Activated T-helper 1 cell treated with anti-CD3 and anti-CD28 coated beads, Interleukin-12 subunit alpha, Interleukin-12 subunit beta, Interleukin-2, Interleukin-4 antibody, amounts not matched to agents 30 ng/mL and 10 ng/mL and 1 ng/mL, durations not matched to agents 14 hours and 24 hours and 36 hours (primary cell): ENCODE measurements at regions of chr1 and their contacts with region 1.

Region 1: DNA sequence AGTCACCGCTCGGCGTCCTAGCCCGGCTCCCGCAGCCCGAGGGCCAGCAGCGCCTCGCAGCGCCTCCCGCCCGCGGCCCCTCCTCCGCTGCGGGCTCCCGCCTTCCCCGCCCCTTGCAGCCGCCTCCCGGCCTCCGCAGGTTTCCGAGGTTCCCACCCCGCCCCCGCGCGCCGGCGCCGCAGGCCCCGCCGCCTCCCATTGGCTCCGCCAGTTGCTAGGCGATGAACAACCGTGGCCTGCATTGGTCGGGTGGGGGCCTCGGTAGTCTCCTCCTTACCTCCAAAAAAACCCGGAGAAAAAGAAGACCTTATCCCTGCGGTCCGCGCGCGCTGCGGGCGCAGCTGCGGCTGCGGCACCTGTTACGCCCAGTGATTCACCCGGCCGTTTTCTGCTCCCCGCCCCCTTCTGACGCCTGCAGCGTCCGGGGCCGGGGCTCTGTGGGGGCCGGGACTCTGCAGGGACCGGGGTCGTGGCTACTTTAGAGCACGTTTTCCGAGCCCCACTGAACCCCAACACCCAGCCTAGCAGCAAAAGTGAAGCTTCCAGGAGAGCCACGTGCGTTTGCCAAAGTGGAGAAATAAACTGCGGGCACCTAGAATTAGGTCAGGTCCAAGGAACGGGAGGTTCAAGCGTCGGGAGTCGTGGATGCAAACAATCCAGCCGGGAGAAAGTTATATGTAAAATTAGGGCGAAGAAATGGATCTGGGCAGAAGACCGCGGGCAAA is at the start of gene SSX2IP:
- DNase-seq: peak; percentile 98
- H3K4me3 Mint-ChIP-seq: peak within 1 kb of the TSS; percentile 94
- H3K27ac Mint-ChIP-seq: peak within 1 kb of the TSS; percentile 95
- H3K4me1 Mint-ChIP-seq: peaks cover 59% of the 10 kb centered on the region
- H3K27me3 Mint-ChIP-seq: no peaks in the 10 kb centered on the region
- total RNA-seq, gene SSX2IP: 11.1 and 15.0 TPM in 2 replicates

Region 2: GRCh38 chr1:84077476-84078107 is 613.0 kb before region 1 on chr1:
- intact Hi-C with region 1: loop called (anchors 5 kb)
- DNase-seq: peak; percentile 63
- H3K4me3 Mint-ChIP-seq: peak overlapping the region; percentile 87
- H3K27ac Mint-ChIP-seq: peak overlapping the region; percentile 71
- H3K4me1 Mint-ChIP-seq: peaks cover 17% of the 10 kb centered on the region
- H3K27me3 Mint-ChIP-seq: peaks cover 23% of the 10 kb centered on the region

Region 3: DNA sequence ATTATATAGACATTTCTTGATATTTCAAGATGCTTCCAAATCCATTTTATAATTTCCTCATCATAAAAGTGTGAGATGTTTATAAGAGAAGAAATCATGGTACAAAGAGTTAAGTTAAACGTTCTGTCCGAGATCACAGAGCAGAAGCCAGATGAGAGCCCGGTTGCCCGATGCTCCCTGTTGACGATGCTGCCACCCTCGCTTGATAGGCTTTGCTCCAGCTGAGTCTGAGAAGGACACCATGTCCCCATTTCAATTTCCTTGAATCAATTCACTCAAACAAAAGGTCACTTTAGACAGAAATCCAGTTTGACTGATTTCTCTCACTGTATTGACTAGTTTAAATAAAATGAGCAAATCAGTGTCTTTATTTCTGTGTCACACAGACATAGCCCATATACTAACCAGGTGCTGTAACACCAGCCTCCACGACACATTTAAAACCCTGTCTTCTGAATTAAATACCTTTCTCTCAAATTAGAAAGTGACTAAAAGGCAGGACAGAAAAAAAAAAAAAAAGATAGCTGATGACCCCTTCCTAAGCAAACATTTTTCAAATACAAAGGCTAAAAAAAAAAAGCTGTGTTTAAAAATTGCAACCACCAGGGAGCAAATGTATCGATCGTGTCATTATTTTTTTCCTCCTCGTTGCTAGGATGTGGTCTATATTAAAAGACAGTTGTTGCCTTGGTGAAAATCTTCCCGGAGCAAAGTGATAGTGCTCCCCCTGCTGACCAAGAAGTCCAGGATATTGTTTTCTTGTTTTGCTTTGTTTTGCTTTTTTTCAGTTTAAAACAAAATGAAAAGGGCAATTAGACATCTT is 257.1 kb before region 1 on chr1:
- intact Hi-C with region 1: loop called (anchors 2 kb)
- DNase-seq: peak; percentile 54
- H3K4me3 Mint-ChIP-seq: peak overlapping the region; percentile 41
- H3K27ac Mint-ChIP-seq: peak overlapping the region; percentile 9
- H3K4me1 Mint-ChIP-seq: peaks cover 11% of the 10 kb centered on the region
- H3K27me3 Mint-ChIP-seq: no peaks in the 10 kb centered on the region

Region 4: GRCh38 chr1:84478876-84479868 is 211.4 kb before region 1 on chr1 and contains the start of gene RPF1:
- intact Hi-C with region 1: loop called (anchors 1 kb)
- DNase-seq: peak; percentile 70
- H3K4me3 Mint-ChIP-seq: peak within 1 kb of the TSS; percentile 98
- H3K27ac Mint-ChIP-seq: peak within 1 kb of the TSS; percentile 97
- H3K4me1 Mint-ChIP-seq: peaks cover 34% of the 10 kb centered on the region
- H3K27me3 Mint-ChIP-seq: peaks cover 28% of the 10 kb centered on the region
- total RNA-seq, gene RPF1: 65.2 and 65.5 TPM in 2 replicates

Region 5: DNA sequence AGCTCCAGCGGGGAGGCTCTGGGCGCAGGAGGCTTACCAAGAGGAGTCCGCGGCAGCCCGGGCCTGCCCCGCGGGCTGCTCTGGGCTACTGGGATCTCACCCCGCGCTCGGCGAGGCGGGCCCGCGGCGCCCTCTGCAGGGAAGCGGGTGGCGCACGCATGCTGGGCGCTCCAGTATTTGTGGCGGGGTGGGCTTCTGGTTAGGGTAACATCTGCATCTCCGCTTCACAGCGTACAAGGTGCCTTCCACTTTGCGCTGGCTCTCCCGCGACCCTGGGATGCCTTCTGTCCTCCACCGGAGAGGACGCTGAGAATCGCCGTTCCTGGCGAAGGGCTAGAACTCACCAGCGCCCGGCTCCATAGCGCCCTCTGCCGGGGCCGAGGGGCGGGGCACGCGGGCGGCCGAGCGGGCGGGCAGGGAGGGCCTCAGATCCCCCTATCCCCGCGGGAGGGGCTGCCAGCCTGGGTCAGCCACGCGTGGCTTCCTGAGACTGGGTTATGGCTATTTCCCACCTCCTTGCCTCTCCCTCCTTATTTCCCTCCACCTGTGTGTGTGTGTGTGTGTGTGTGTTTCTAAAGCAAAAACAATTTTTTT is 69.7 kb before region 1 on chr1:
- intact Hi-C with region 1: loop called (anchors 1 kb)
- DNase-seq: peak; percentile 79
- H3K4me3 Mint-ChIP-seq: peak overlapping the region; percentile 88
- H3K27ac Mint-ChIP-seq: peak overlapping the region; percentile 80
- H3K4me1 Mint-ChIP-seq: peaks cover 23% of the 10 kb centered on the region
- H3K27me3 Mint-ChIP-seq: no peaks in the 10 kb centered on the region

Region 6: DNA sequence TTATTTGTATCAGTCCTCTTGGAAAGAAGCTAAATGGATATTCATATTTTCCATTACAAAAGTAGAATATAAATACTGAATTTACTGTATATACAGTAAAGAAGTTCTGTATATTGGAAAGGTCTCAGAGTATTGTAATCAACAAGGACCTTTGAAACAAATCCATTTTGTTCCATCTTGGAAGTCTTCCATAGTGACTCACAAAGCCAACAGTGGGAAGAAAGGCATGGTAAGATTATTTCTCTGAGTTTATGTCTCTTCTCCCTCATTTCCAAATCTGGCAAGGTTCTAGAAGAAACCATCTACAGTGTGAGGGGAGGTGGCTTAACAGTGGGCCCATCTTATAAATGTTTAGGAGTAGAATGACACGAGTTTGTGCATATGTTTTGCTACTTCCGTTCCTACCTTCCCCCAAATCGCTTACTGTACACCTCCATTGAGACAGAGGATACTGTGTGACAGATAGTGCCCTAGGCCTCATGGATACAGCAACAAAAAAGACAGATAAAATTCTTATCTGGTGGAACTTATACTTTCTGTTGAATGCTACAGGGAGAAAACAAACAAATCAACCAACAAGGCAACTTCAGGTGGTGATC is 21.8 kb after region 1 on chr1:
- intact Hi-C with region 1: no loop called
- DNase-seq: no peak
- H3K4me3 Mint-ChIP-seq: no peak overlapping the region
- H3K27ac Mint-ChIP-seq: no peak overlapping the region
- H3K4me1 Mint-ChIP-seq: no peaks in the 10 kb centered on the region
- H3K27me3 Mint-ChIP-seq: peaks cover 12% of the 10 kb centered on the region

Region 7: GRCh38 chr1:84862810-84863251 is 172.3 kb after region 1 on chr1:
- intact Hi-C with region 1: loop called (anchors 5 kb)
- DNase-seq: peak; percentile 66
- H3K4me3 Mint-ChIP-seq: peak overlapping the region; percentile 77
- H3K27ac Mint-ChIP-seq: peak overlapping the region; percentile 82
- H3K4me1 Mint-ChIP-seq: peaks cover 53% of the 10 kb centered on the region
- H3K27me3 Mint-ChIP-seq: peaks cover 1% of the 10 kb centered on the region

Region 8: DNA sequence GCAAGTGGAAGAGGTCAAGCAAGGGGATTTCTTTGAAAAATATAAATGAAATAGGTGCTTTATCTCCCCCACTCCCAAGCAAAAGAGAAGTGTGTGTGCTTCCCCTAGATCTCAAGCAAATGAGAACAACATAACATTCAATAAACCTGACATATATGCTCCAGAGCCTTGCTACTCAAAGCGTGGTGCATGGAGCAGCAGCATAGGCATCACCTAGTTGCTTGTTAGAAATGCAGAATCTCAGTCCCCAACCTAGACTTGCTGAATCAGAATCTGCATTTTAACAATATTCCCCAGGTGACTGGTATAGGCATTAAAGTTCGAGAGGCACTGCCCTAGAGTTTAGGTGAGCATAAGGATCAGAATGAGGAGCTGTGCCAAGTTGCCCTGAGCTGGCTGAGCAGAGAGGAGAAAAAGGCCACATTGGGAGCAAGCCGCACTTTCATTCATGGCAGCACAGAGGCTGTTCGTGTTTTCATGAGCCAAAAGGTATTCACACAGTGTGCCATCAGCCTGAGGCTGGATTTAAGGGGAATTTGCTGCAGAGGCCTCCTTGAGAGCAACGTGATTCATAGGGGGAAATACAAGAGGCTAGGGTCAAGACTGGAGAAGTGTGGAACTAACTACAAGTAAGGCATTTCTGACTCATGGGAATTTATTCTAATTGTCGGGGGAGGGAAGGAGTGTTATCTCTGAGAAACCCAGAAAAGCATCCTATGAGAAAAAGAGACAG is 216.7 kb after region 1 on chr1:
- intact Hi-C with region 1: no loop called
- DNase-seq: no peak
- H3K4me3 Mint-ChIP-seq: no peak overlapping the region
- H3K27ac Mint-ChIP-seq: no peak overlapping the region
- H3K4me1 Mint-ChIP-seq: no peaks in the 10 kb centered on the region
- H3K27me3 Mint-ChIP-seq: peaks cover 22% of the 10 kb centered on the region

Region 9: DNA sequence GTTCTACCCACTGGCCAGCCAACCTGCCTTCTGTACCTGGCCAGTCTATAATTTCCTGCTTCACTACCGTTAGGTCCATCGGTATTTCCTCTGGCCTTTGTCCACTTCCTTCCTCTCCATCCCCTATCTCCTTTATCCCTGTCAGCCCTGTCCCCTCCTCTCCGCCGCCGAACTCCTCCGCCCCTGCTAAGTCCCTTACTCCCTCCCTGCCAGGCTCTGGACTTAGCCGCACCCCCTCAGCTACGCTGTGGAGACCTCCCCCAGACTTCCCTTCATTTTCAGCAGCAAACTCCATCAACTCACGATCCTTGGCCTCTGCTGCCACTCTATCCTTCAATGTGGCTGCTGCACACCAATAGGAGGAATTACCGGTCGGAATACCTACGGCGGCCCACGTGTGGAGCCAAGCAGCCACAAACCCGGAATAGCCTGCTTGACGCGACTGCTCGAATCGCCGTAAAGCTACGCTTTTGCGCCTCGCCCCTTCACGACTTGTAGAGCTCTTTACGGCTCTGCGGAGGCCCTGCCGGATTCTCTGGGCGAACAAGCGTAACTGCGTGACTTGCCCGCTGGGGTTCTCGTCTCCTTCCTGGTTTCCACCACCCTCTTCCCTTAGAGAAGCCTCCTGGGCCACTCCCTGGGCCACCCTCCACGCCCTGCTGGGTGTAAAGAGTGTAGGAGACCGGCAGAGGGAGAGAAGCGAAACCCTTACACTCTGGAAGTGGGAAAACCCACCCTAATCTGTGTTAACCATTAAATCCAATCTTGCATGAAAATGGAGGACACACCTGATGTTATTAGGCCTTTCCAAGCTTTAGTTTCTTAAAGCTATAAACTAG is 1017.6 kb after region 1 on chr1 and contains the start of gene ZNHIT6:
- intact Hi-C with region 1: loop called (anchors 5 kb)
- DNase-seq: peak; percentile 82
- H3K4me3 Mint-ChIP-seq: no peak within 1 kb of the TSS
- H3K27ac Mint-ChIP-seq: no peak within 1 kb of the TSS
- H3K4me1 Mint-ChIP-seq: peaks cover 11% of the 10 kb centered on the region
- H3K27me3 Mint-ChIP-seq: no peaks in the 10 kb centered on the region
- total RNA-seq, gene ZNHIT6: 24.6 and 26.3 TPM in 2 replicates